PC-3 (cell line): ENCODE measurements at regions of chrX and their contacts with region 1.

Region 1: DNA sequence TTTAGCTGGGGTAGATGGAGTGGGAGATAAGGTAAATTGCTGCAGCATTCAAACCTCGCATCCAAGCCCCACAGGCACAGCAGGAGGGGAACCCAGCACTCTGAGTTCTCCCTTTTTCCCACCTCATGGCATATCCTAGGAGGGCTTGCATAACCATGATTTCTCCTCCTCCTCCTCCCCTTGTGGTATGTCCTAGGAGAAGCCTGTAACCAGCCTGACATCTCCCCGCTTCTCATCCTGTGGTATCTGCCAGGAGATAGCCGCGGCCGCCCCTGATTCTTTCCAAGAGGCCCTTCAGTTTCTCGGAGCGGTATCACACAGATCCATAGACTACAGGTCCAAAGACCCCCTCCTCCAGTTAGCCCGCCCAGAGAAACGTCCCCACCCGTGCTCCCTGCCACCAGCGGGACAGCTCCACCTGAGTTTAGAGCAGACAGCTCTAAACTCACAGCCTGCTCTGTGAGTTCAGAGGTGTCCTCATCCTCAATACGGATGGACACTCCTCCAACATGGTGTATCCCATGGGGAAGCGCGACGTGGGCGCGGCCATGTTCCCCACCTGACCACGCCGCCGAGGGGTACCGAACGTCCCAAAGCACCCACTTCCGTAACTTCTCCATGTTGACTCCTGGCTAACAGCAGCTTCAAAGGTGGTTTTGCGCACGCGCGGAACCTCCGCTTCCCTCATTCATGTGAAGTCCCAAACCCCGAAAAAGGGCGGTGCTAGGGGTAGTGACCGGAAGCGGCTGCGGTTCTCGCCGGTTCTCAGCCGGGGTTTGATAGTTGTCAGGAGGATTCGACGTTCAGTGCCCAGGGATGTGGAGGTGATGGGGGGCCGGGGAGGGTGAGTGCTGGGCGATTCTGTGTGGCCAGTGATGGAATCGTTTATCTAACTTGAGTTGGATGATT is at the start of gene ZNF81:
- DNase-seq: peak; percentile 97
- ATAC-seq: peak; percentile 96
- H3K4me3 ChIP-seq: peak within 1 kb of the TSS; percentile 87
- H3K27ac ChIP-seq: peak within 1 kb of the TSS; percentile 43; the same call in 1 of the 2 replicates
- H3K4me1 ChIP-seq: peaks cover 12% of the 10 kb centered on the region
- H3K27me3 ChIP-seq: no peaks in the 10 kb centered on the region
- CTCF ChIP-seq: no peak
- total RNA-seq, gene ZNF81: 4.4 and 9.5 TPM in 2 replicates

Region 2: DNA sequence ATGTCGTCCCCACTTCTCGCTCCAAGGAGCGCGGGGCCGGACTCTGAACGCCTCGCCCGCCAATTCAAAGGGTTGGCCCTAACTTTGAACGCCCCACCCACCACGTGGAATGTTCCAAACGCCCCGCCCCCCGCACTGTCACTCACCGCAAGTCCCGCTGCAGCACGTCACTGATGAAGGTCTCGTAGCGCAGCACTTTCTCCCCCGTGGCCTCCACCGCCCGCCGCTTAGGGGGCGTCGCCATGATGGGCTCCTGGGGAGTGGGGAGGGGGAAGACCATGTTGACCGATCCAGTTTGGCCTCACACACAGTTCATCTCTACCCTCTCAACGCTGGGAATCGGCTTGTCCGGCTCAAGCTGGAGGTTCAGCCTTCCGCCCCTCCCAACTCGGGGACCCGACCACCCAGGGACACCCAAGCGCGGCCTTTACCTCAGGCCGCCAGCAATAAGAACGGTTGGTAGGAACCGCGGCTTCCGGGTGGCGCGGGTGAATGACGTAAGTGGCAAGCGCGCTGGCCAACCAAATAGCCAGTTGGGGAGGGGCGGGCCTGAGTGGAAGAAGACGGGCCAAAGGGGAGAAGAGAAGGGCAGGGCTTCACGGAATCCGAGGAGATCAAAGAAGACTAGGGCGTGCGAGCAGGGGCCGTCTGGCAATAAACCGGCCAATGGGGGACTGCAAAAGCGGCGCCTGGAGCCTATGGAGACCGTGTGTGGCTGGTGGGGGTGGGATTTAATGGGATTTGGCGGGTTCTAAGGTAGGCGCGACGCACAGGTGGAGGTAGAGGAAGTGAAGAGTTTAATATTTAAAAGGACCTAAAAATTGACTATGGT is 177.5 kb before region 1 on chrX and contains the start of gene UXT:
- CTCF ChIA-PET with region 1: no interaction called
- POLR2A ChIA-PET with region 1: no interaction called
- intact Hi-C with region 1: loop called (anchors 2 kb)
- DNase-seq: peak; percentile 93
- ATAC-seq: peak; percentile 88
- H3K4me3 ChIP-seq: peak within 1 kb of the TSS; percentile 81
- H3K27ac ChIP-seq: peak within 1 kb of the TSS; percentile 93
- H3K4me1 ChIP-seq: peaks cover 15% of the 10 kb centered on the region
- H3K27me3 ChIP-seq: no peaks in the 10 kb centered on the region
- CTCF ChIP-seq: no peak
- total RNA-seq, gene UXT: 143 and 144 TPM in 2 replicates

Region 3: GRCh38 chrX:47854474-47854873 is 18.1 kb after region 1 on chrX:
- CTCF ChIA-PET with region 1: no interaction called
- POLR2A ChIA-PET with region 1: no interaction called
- intact Hi-C with region 1: no loop called
- DNase-seq: peak; percentile 30
- ATAC-seq: peak; percentile 63
- H3K4me3 ChIP-seq: no peak overlapping the region
- H3K27ac ChIP-seq: no peak overlapping the region
- H3K4me1 ChIP-seq: no peaks in the 10 kb centered on the region
- H3K27me3 ChIP-seq: no peaks in the 10 kb centered on the region
- CTCF ChIP-seq: peak; percentile 53